Activated B cell treated with CpG ODN at 0.5 μM for 24 hours (primary cell): ENCODE measurements at regions of chr5 and their contacts with region 1.

Region 1: DNA sequence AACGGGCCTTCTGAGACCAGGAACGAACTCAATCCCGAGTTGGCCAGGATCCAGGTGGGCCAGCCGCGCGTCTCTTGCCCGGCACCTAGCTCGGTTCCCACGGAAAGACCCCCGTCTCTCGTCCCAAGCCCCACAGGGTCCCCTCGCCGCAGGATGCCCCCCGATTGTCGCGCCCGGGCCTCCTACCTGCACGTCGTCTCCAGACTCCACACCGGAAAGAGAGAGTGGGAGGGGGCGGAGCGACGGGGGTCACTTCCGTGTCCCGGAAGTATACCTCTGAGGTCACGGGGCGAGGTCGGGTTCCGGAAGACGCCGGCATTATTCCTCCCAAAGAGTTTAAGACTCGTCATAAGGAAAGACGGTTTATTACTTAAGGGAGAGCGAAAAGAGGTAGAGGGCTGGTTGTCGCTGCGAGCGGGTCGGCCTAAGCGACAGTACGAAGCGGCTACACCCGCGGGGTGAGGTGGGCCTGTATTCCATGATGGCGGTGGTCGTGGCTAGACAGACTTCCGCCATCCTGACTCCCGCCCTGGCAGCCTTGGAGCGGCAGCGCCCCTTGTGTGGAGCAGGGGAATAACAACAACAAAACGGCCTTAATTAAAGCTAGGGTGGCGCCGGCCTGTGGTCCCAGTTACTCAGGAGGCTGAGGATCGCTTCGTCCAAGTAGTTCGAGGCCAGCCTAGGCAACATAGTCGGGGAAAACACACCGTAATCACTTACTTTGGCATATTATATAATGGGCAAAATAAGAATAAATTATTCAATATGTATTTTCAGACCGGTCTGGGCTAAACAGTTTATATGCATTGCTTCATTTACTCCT is at the start of gene RPS14:
- DNase-seq: peak; percentile 91
- ATAC-seq: peak; percentile 93
- H3K4me3 Mint-ChIP-seq: peak within 1 kb of the TSS; percentile 100
- H3K27ac Mint-ChIP-seq: peak within 1 kb of the TSS; percentile 100
- H3K4me1 Mint-ChIP-seq: peaks cover 43% of the 10 kb centered on the region
- H3K27me3 Mint-ChIP-seq: no peaks in the 10 kb centered on the region
- CTCF ChIP-seq: peak; percentile 53
- total RNA-seq, gene RPS14: 4,086 and 4,865 TPM in 2 replicates

Region 2: DNA sequence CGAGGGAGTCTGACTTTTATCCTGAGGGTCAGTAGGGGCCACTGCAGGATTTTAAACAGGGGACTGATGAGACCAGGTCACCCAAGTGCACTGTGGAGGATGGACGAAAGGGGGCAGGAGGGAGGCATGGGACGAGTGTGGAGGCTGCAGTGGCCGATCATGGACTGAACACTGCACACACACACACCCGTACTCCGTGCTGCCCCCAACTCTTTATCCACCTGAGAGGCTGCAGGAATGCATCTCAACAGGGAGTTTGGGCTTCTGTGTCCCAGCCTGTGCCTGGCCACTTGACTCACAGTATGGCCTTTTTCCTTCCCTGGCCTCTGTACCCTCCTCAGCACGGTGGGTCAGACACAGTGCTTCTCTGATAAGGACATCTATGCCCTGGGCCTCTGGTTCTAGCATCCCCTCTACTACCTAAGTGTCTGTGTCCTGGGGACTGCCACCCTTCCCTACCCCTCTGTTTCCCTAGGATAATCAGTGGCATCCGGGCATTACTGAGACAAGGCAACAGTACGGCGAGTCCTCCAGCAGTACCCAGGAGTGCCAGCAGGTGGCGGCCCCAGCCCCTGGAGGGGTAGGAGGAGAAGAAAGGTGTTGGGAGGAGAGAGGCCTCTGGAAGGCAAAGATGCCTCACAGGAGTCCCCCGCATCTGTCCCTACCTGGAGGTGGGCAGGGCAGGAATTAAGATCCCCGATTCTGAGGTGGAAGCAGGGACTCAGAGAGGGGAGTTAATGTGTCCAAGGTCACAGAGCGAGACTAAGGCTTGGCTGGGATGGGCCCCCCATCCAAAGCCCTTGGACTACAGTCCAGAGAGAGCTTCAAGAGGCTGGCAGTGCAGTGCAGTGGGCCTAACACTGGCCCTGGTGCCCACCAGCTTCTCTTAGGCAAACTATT is 288.2 kb before region 1 on chr5:
- CTCF ChIA-PET with region 1: no interaction called
- POLR2A ChIA-PET with region 1: no interaction called
- intact Hi-C with region 1: loop called (anchors 5 kb)
- DNase-seq: peak; percentile 70
- ATAC-seq: peak; percentile 88
- H3K4me3 Mint-ChIP-seq: no peak overlapping the region
- H3K27ac Mint-ChIP-seq: no peak overlapping the region
- H3K4me1 Mint-ChIP-seq: peaks cover 19% of the 10 kb centered on the region
- H3K27me3 Mint-ChIP-seq: peaks cover 8% of the 10 kb centered on the region
- CTCF ChIP-seq: peak; percentile 65

Region 3: GRCh38 chr5:150398722-150399523 is 50.8 kb before region 1 on chr5:
- CTCF ChIA-PET with region 1: interaction called, 21 read pairs
- POLR2A ChIA-PET with region 1: interaction called, 2,478 read pairs
- intact Hi-C with region 1: loop called (anchors 1 kb)
- DNase-seq: peak; percentile 59
- ATAC-seq: peak; percentile 71
- H3K4me3 Mint-ChIP-seq: peak overlapping the region; percentile 28
- H3K27ac Mint-ChIP-seq: peak overlapping the region; percentile 80
- H3K4me1 Mint-ChIP-seq: peaks cover 50% of the 10 kb centered on the region
- H3K27me3 Mint-ChIP-seq: no peaks in the 10 kb centered on the region
- CTCF ChIP-seq: no peak

Region 4: DNA sequence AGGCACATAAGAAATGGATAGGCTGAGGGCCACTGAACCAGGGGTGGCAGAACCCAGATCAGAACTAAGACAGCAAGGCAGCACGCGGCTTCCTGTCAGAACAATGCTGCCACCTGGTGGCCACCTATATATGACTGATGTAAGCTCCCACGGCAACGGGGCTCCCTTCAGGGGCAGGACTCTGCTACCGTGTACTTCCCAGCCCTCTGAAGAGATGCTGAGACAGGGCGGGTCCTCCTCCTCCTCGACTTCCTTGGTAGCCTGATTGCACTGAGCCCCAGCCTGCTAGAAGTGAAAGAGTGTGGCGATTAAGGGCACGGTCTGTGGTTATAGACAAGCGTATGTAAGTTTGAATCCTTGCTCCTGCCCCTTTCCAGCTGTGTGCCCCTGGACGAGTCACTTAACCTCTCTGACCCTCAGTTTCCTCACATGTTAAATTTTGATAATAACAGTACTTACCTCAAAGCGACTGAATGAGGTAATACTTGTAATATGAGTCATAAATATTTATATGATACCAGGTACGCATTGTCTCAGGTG is 13.5 kb before region 1 on chr5:
- CTCF ChIA-PET with region 1: interaction called, 4 read pairs
- POLR2A ChIA-PET with region 1: interaction called, 13 read pairs
- intact Hi-C with region 1: no loop called
- DNase-seq: peak; percentile 76
- ATAC-seq: peak; percentile 95
- H3K4me3 Mint-ChIP-seq: peak overlapping the region; percentile 50
- H3K27ac Mint-ChIP-seq: peak overlapping the region; percentile 92
- H3K4me1 Mint-ChIP-seq: peaks cover 47% of the 10 kb centered on the region
- H3K27me3 Mint-ChIP-seq: no peaks in the 10 kb centered on the region
- CTCF ChIP-seq: no peak

Region 5: GRCh38 chr5:150624334-150625163 is 174.8 kb after region 1 on chr5:
- CTCF ChIA-PET with region 1: no interaction called
- POLR2A ChIA-PET with region 1: interaction called, 10 read pairs
- intact Hi-C with region 1: loop called (anchors 5 kb)
- DNase-seq: peak; percentile 44
- ATAC-seq: peak; percentile 23
- H3K4me3 Mint-ChIP-seq: peak overlapping the region; percentile 94
- H3K27ac Mint-ChIP-seq: peak overlapping the region; percentile 76
- H3K4me1 Mint-ChIP-seq: peaks cover 57% of the 10 kb centered on the region
- H3K27me3 Mint-ChIP-seq: no peaks in the 10 kb centered on the region
- CTCF ChIP-seq: no peak

Region 6: GRCh38 chr5:150758531-150759333 is 309.0 kb after region 1 on chr5 and contains the start of gene DCTN4:
- CTCF ChIA-PET with region 1: no interaction called
- POLR2A ChIA-PET with region 1: interaction called, 3 read pairs
- intact Hi-C with region 1: loop called (anchors 1 kb)
- DNase-seq: peak; percentile 87
- ATAC-seq: peak; percentile 93
- H3K4me3 Mint-ChIP-seq: no peak within 1 kb of the TSS
- H3K27ac Mint-ChIP-seq: no peak within 1 kb of the TSS
- H3K4me1 Mint-ChIP-seq: peaks cover 17% of the 10 kb centered on the region
- H3K27me3 Mint-ChIP-seq: peaks cover 9% of the 10 kb centered on the region
- CTCF ChIP-seq: no peak
- total RNA-seq, gene DCTN4: 49.0 and 49.8 TPM in 2 replicates